Left colon (tissue), 2 donors: ENCODE measurements at regions of chr17 and their contacts with region 1.

Region 1: GRCh38 chr17:81601525-81602120 is 35.3 kb downstream of the NPLOC4 start:
- DNase-seq: peak in 1 of 2 donors; percentile 33
- ATAC-seq: peak; percentile 91

Region 2: DNA sequence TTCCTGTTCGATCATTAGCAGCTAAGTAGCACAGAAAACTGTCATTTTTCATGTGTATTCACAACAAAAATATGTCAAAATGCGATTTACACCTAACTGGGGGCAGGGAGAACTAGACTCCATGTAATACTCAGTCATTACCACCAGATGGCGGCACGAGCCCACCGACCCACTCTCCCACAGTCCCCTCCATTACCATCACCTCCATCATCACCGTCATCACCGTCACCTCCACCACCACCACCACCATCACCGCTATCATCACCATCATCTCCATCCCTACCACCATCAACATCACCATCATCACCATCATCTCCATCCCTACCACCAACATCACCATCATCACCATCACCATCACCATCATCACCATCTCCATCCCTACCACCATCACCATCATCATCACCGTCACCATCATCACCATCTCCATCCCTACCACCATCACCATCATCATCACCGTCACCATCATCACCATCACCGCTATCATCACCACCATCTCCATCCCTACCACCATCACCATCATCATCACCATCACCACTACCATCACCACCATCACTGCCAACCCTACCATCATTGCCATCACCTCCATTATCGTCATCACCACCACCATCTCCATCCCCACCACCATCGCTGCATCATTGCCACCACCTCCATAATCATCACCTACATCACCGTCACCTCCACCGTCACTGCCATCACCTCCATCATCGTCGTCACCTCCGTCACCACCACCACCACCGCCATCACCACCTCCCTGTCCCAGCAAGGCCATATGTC is 348.1 kb before region 1 on chr17:
- intact Hi-C with region 1: loop called in 1 of 2 experiments (anchors 5 kb)
- DNase-seq: peak in 1 of 2 donors; percentile 42
- ATAC-seq: no peak

Region 3: DNA sequence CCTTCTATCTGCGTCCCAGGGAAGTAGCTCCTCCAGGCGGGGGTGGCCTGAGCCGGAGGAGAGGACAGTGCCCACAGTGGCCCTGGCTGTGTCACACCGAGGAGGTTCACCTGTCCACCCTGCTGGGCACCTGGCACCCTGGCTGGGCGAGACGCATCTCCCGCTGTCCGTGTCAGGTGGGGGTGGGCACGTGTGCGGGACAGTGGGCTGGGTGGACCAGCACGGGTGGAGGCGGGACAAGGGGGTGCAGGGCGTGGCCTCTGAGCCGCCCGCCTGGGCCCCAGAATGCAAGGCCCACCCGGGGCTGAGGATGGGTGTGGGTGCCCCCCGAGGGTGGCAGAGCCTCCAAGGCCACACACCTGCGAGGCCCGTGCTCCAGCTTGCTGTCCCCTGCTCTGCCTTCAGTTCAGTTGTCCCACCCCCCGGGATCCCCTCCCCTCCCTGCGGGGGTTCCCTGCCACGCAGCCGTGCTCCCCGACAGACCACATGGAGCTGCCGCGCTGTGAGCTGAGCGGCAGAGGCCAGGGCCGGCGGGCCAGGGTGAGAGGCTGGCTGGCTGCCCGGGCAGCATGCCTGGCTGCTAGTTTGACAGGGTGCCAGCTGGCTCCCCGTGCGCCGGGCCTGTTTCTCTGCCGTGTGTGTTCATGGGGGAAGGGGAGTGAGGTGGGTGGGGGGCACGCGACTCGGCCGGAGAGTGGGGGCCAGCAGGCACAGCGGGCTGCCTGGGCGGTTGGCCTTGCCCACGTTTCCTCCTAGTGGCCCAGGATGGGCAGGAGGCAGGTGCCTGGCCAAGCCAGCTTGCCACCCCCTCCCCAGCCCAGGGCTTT is 172.5 kb before region 1 on chr17:
- intact Hi-C with region 1: no loop called
- DNase-seq: peak; percentile 59 to 80
- ATAC-seq: peak; percentile 70

Region 4: DNA sequence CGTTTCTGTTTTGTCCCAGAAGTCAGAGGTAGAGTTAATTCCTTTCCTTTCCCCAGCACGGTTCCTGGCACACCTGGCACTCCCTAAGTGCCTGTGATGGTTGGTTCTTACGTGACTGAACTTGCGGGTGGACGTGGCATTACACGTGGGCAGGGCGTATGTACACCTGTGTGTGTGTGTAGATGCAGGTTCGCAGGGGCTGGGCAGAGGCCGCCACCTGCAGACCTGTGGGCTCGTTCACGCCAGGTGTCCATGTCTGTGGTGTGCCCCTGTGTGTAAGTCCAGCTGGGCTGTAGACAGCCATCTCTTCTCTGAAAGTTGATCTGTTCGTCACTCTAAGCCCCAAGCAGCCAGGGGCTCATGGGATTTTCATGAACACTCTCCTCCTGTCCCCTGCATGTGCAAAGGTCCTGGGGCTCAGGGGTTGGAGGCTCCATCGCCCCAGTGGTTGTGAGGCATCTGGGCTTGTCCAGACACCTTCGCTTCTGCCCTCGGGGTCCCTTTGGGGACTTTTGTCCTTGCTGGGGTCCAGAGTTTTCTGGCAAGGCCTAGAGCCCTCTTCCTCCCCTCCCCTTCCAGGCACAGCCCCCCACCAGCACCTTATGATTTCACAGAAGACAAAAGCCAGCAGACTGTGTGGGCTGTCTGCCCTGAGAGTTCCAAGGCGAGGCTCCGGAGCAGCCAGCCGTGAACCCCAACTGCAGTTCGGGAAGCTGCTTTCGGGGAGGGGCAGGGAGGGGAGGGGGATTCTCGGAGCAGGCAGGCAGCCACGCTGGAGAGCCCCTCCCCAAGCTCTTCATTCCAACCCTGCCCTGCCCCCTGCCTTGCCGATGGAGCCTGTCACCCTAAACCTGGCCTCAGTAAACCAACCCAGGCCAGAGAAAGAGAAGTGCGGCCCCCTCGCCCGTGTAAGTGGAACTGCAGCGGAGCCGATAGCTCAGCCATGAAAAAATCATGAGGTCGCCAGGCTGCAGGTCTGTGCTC is 78.8 kb before region 1 on chr17:
- intact Hi-C with region 1: loop called in 1 of 2 experiments (anchors 10 kb)
- DNase-seq: no peak
- ATAC-seq: no peak

Region 5: DNA sequence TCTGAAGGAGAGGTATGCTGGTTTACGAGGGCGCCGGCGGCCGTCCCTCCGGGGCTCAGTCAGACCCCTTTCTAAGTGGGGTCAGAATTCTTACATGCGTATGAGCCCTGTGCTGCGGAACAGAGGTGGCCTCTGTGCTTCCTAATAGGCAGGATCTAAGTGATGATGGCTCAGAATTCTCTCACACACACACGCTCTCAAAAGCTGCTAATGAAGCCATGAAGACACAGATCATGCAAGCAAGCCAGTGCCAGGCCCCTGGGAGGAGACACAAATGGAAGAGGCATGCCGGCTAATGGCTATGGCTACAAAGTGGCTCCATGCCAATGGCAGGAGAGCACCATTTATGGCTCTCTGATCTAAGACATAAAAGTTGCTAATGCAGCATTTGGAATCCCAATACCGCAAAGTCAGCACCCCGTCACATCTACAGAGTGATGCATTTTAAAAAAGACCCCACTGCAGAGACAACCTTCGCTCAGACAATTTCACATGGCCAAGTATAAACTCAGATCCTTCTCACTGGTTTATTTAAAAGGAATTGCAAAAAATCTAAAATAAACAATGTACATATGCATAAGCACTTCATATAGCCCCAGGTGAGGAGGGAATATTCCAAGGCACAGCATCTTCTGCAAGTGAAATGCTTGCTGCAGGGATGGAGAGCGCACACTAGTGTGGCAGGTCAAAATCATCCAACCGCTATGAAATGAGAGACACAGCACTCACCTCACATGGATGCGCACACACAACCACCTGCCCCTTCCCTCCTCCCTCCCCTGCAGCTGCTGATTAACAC is 10.7 kb after region 1 on chr17:
- intact Hi-C with region 1: no loop called
- DNase-seq: no peak
- ATAC-seq: no peak